ENCODE measurements at regions of chr22 and their contacts with region 1.

Region 1: DNA sequence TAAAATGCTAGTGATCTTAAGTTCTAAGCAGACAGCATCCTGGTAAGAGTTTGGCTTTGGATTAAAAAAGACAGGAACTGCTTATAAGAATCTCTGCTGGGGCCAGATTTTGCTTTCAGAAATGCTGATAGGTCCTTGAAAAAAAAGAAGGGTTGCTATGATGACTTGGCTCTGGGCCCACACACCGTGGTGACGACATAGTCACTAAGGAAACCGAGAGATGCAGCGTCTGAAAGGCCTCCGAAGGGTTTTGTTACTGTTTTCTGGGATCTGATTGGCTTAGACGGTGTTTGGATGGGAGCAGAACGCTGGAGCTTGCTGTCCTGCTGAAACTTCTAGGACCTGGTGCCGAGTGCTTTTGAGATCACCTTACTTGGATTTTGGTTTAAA is 8.4 kb downstream of the FAM118A start:
- DNase-seq: peak; percentile 83
- H3K4me3 Mint-ChIP-seq: peak overlapping the region; percentile 79
- H3K27ac Mint-ChIP-seq: peak overlapping the region; percentile 97
- H3K4me1 Mint-ChIP-seq: peaks cover 69% of the 10 kb centered on the region
- H3K27me3 Mint-ChIP-seq: no peaks in the 10 kb centered on the region

Region 2: DNA sequence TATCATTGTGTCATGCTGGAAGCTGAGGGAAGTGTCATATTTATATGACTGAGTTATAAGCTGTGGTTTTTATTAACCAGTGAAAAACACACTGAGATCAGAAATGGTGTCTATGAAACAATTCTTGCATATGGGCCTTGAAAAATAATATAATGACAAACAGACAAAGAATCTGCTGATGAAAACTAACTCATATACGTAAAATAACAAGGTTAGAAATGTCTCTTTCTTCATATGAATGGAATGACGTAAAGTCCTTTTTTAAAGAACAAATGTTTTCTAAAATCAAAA is 259.6 kb before region 1 on chr22:
- intact Hi-C with region 1: no loop called
- DNase-seq: no peak
- H3K4me3 Mint-ChIP-seq: no peak overlapping the region
- H3K27ac Mint-ChIP-seq: no peak overlapping the region
- H3K4me1 Mint-ChIP-seq: peaks cover 3% of the 10 kb centered on the region
- H3K27me3 Mint-ChIP-seq: peaks cover 2% of the 10 kb centered on the region

Region 3: DNA sequence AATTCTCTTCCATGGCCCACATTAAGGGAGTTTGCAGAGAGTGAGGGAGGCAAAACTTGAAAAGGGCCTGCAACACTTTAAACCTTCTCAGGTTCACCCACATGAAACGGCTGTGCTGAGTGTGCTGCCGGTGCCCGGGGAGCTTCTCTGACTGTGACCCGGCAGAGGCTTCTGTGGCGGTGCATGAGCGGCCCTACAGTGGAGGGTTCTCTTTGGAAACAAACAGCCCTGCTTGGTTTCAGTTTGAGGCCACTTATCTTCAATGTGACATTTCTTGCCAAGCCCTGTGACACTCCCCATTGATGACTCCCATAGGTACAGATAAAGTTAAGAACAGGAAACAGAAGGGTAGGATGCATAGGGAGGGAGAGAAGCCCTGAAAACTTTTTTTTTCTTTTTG is 23.3 kb after region 1 on chr22:
- intact Hi-C with region 1: loop called (anchors 1 kb)
- DNase-seq: peak; percentile 38
- H3K4me3 Mint-ChIP-seq: peak overlapping the region; percentile 52
- H3K27ac Mint-ChIP-seq: peak overlapping the region; percentile 75
- H3K4me1 Mint-ChIP-seq: peaks cover 15% of the 10 kb centered on the region
- H3K27me3 Mint-ChIP-seq: no peaks in the 10 kb centered on the region

Region 4: GRCh38 chr22:45413368-45414211 is 95.4 kb after region 1 on chr22 and contains the starts of genes RIBC2 and SMC1B:
- intact Hi-C with region 1: loop called (anchors 1 kb)
- DNase-seq: peak; percentile 85
- H3K4me3 Mint-ChIP-seq: peak within 1 kb of the TSS; percentile 88
- H3K27ac Mint-ChIP-seq: peak within 1 kb of the TSS; percentile 94
- H3K4me1 Mint-ChIP-seq: peaks cover 13% of the 10 kb centered on the region
- H3K27me3 Mint-ChIP-seq: no peaks in the 10 kb centered on the region
- total RNA-seq, gene RIBC2: 10.6 and 12.6 TPM in 2 replicates
- total RNA-seq, gene SMC1B: 0.44 and 0.83 TPM in 2 replicates